ENCODE measurements at regions of chr16 and their contacts with region 1.

Region 1: DNA sequence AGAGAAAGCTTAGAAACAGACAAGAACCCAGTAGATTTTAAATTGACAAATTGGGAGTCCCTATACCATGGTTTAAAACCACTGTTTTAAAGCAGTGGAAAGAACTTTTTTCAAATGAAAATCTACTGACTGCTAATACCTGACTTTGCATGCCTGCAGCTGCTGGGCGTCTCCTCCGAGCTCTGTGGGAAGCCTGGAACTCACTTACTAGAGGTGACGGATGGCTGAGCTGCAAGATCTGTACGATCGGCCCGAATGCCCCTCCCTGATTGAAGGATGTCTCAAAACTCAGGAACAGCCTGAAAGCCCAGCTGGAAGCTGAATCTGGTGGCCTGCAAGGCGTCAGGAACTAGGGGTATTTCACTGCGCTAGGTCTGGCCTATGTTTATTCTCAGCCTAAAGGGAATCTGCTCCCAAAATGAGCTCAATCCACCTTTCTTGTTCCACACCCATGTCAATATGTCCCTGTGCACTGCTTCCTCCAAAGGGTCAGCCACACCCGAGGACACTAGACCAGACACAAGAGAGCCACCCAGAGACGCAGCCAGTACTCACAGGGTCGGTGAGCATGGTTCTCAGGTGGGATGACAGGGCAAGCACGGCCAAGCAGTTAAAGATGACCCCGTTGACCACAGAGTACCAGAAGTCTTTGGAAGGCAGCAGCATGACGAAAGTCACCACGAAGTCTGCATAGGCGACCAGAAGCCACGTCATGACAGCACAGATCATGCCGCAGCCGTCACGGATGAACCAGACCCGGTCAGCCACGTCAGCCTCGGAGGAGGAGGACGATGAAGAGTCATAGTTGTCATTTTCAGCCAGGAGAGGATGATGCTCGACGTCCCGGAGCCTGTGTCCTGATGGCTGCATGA is 21.4 kb downstream of the ZDHHC7 start:
- DNase-seq: no peak
- H3K4me3 ChIP-seq: no peak overlapping the region
- H3K27ac ChIP-seq: no peak overlapping the region
- H3K4me1 ChIP-seq: no peaks in the 10 kb centered on the region
- H3K27me3 ChIP-seq: no peaks in the 10 kb centered on the region
- CTCF ChIP-seq: no peak

Region 2: GRCh38 chr16:86240716-86241363 is 1250.9 kb after region 1 on chr16:
- CTCF ChIA-PET with region 1: no interaction called
- POLR2A ChIA-PET with region 1: no interaction called
- intact Hi-C with region 1: no loop called
- DNase-seq: no peak
- H3K4me3 ChIP-seq: no peak overlapping the region
- H3K27ac ChIP-seq: no peak overlapping the region
- H3K4me1 ChIP-seq: no peaks in the 10 kb centered on the region
- H3K27me3 ChIP-seq: peaks cover 65% of the 10 kb centered on the region
- CTCF ChIP-seq: no peak

Region 3: GRCh38 chr16:86343027-86343787 is 1353.2 kb after region 1 on chr16:
- CTCF ChIA-PET with region 1: interaction called, 16 read pairs
- POLR2A ChIA-PET with region 1: no interaction called
- intact Hi-C with region 1: no loop called
- DNase-seq: no peak
- H3K4me3 ChIP-seq: no peak overlapping the region
- H3K27ac ChIP-seq: no peak overlapping the region
- H3K4me1 ChIP-seq: no peaks in the 10 kb centered on the region
- H3K27me3 ChIP-seq: peaks cover 60% of the 10 kb centered on the region
- CTCF ChIP-seq: no peak